ENCODE measurements at regions of chr1 and their contacts with region 1.

Region 1: DNA sequence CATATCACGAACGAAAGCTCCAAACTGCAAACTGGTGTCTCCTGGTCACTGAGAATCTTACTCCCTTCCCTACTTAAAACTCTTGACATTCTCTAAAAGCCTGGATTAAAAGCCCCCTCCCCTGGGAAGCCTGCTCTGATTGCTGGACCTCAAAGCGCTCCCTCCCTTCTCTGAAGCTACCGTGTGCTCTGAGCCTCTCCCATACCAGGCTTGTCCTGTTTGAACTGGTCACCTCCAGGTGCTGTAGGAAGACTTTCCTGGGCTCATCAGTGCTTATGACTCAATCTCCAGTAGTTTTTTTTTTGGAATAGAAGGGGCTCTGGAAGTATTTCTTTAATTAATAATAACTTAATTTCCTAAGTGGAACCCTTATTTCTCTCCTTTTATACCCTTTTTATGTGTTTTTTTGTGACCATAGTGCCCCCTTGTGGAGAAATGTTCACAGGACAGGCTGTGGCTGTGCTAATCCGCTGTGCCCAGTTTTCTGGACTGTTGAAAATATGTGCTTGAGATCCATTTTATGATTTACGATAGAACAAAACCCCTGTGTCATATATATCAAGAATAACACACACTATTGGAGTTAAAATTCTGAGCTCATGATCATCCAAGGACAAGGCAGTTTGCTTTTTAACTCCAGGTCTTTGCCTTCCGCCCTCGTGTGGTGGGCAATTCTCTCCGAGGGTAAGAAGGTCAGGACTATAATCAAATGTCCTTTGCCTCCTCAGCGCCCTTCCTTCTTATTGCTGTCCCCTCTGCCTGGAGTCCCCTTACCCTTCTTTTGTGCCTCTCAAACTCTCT is 16.9 kb downstream of the MTARC1 start:
- DNase-seq: peak; percentile 36
- ATAC-seq: peak; percentile 69
- H3K4me3 ChIP-seq: no peak overlapping the region
- H3K27ac ChIP-seq: peak overlapping the region; percentile 79; the same call in 1 of the 2 replicates
- H3K4me1 ChIP-seq: peaks cover 10% of the 10 kb centered on the region; the same call in 1 of the 2 replicates
- H3K27me3 ChIP-seq: no peaks in the 10 kb centered on the region; the same call in 1 of the 2 replicates
- CTCF ChIP-seq: peak; percentile 55
- POLR2A ChIP-seq: no peak
- RAD21 ChIP-seq: peak; percentile 22; the same call in 1 of the 2 replicates

Region 2: GRCh38 chr1:220235462-220235861 is 568.1 kb before region 1 on chr1:
- CTCF ChIA-PET with region 1: no interaction called
- POLR2A ChIA-PET with region 1: interaction called, 10 read pairs
- dilution Hi-C with region 1: no loop called
- in situ Hi-C with region 1: no loop called
- intact Hi-C with region 1: no loop called
- DNase-seq: peak; percentile 41
- ATAC-seq: peak; percentile 51
- H3K4me3 ChIP-seq: no peak overlapping the region
- H3K27ac ChIP-seq: no peak overlapping the region
- H3K4me1 ChIP-seq: peaks cover 1% of the 10 kb centered on the region; the same call in 1 of the 2 replicates
- H3K27me3 ChIP-seq: no peaks in the 10 kb centered on the region
- CTCF ChIP-seq: no peak
- POLR2A ChIP-seq: no peak
- RAD21 ChIP-seq: no peak

Region 3: GRCh38 chr1:220320709-220321108 is 482.9 kb before region 1 on chr1:
- CTCF ChIA-PET with region 1: no interaction called
- POLR2A ChIA-PET with region 1: interaction called, 10 read pairs
- dilution Hi-C with region 1: no loop called
- in situ Hi-C with region 1: no loop called
- intact Hi-C with region 1: no loop called
- DNase-seq: no peak
- ATAC-seq: no peak
- H3K4me3 ChIP-seq: no peak overlapping the region
- H3K27ac ChIP-seq: no peak overlapping the region
- H3K4me1 ChIP-seq: no peaks in the 10 kb centered on the region
- H3K27me3 ChIP-seq: no peaks in the 10 kb centered on the region; the same call in 1 of the 2 replicates
- CTCF ChIP-seq: no peak
- POLR2A ChIP-seq: no peak
- RAD21 ChIP-seq: no peak

Region 4: DNA sequence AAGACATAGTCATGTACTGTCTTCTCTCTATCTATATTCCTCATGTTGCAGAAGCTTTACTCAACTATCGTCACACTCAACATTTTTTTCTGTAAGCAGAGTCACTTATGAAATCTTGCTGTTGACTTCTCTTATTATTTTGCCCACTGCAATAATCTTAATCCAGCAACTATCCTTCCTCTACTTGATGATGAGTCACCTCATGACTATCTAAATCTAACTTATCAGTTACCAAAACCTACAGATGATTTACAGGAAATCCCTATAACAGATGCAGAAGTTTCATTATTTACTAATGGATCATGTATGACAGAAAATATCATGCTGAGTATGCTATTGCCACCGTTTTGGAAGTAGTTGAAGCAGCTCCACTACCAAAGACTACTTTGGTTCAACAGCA is 559.4 kb after region 1 on chr1:
- CTCF ChIA-PET with region 1: no interaction called
- POLR2A ChIA-PET with region 1: no interaction called
- dilution Hi-C with region 1: no loop called
- in situ Hi-C with region 1: no loop called
- intact Hi-C with region 1: no loop called
- DNase-seq: no peak
- ATAC-seq: no peak
- H3K4me3 ChIP-seq: no peak overlapping the region
- H3K27ac ChIP-seq: no peak overlapping the region
- H3K4me1 ChIP-seq: no peaks in the 10 kb centered on the region
- H3K27me3 ChIP-seq: no peaks in the 10 kb centered on the region; the same call in 1 of the 2 replicates
- CTCF ChIP-seq: no peak
- POLR2A ChIP-seq: no peak
- RAD21 ChIP-seq: no peak